Caco-2 (cell line): ENCODE measurements at regions of chr11 and their contacts with region 1.

Region 1: GRCh38 chr11:3057069-3057963 is at the start of gene CARS1:
- DNase-seq: peak; percentile 96 to 98
- H3K4me3 ChIP-seq: peak within 1 kb of the TSS; percentile 100
- H3K4me3 Mint-ChIP-seq: peak within 1 kb of the TSS; percentile 98
- H3K27ac Mint-ChIP-seq: peak within 1 kb of the TSS; percentile 96
- H3K4me1 ChIP-seq: no peaks in the 10 kb centered on the region
- H3K4me1 Mint-ChIP-seq: no peaks in the 10 kb centered on the region
- H3K27me3 ChIP-seq: no peaks in the 10 kb centered on the region
- H3K27me3 Mint-ChIP-seq: no peaks in the 10 kb centered on the region
- CTCF ChIP-seq: no peak
- total RNA-seq, gene CARS1: 117 and 121 TPM in 2 replicates

Region 2: DNA sequence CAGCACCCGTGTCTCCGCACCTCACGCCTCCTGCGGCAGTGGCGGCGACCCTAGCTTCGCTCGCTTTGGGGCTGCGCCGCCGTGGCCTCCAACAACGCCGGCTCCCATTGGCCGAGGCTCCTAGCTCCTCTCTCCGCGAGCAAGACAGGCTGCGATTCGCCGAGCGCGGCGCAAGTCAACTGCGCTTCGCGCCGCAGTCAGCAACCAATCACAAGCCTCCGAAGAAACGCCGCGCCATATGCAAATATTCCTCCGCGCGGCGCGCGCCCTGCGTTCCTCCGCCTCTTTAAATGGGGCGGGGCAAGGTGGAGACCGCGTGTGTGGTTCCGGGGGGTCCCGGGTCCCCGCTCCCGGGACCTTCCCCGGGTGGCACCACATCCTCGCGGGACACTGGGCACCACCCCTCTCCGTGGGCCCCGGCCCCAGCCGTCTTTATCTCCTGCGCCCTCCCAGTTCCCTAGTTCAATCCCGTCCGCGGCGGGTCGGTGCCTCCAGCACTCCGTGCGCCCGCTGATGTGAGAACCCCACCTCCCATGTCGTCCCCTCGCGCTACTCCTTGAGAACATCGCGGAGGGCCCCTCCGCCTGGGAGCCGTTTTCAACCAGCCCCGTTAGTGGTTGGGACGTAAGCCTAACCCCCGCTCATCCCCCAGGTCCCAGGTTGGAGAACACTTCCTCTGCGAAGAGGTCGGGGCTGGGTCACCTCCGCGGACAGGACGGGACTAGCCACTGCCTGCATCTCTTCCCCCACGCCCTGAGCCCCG is 64.9 kb before region 1 on chr11 and contains the start of gene NAP1L4:
- CTCF ChIA-PET with region 1: no interaction called
- POLR2A ChIA-PET with region 1: interaction called, 12 read pairs
- intact Hi-C with region 1: no loop called
- DNase-seq: peak; percentile 97
- H3K4me3 ChIP-seq: peak within 1 kb of the TSS; percentile 76
- H3K4me3 Mint-ChIP-seq: peak within 1 kb of the TSS; percentile 98
- H3K27ac Mint-ChIP-seq: peak within 1 kb of the TSS; percentile 100
- H3K4me1 ChIP-seq: peaks cover 13% of the 10 kb centered on the region
- H3K4me1 Mint-ChIP-seq: peaks cover 24% of the 10 kb centered on the region
- H3K27me3 ChIP-seq: no peaks in the 10 kb centered on the region
- H3K27me3 Mint-ChIP-seq: no peaks in the 10 kb centered on the region
- CTCF ChIP-seq: no peak
- total RNA-seq, gene NAP1L4: 210 and 215 TPM in 2 replicates

Region 3: GRCh38 chr11:3037040-3037944 is 20.0 kb before region 1 on chr11:
- CTCF ChIA-PET with region 1: no interaction called
- POLR2A ChIA-PET with region 1: no interaction called
- intact Hi-C with region 1: loop called (anchors 1 kb)
- DNase-seq: peak; percentile 74 to 81
- H3K4me3 ChIP-seq: no peak overlapping the region
- H3K4me3 Mint-ChIP-seq: no peak overlapping the region
- H3K27ac Mint-ChIP-seq: no peak overlapping the region
- H3K4me1 ChIP-seq: no peaks in the 10 kb centered on the region
- H3K4me1 Mint-ChIP-seq: peaks cover 2% of the 10 kb centered on the region
- H3K27me3 ChIP-seq: no peaks in the 10 kb centered on the region
- H3K27me3 Mint-ChIP-seq: no peaks in the 10 kb centered on the region
- CTCF ChIP-seq: peak; percentile 88